Activated B cell treated with CpG ODN at 0.5 μM for 24 hours (primary cell): ENCODE measurements at regions of chr22 and their contacts with region 1.

Region 1: GRCh38 chr22:43036282-43036829 is 21.4 kb upstream of the PACSIN2 start:
- DNase-seq: no peak
- ATAC-seq: no peak
- H3K4me3 Mint-ChIP-seq: no peak overlapping the region
- H3K27ac Mint-ChIP-seq: no peak overlapping the region
- H3K4me1 Mint-ChIP-seq: peaks cover 2% of the 10 kb centered on the region
- H3K27me3 Mint-ChIP-seq: no peaks in the 10 kb centered on the region
- CTCF ChIP-seq: no peak

Region 2: DNA sequence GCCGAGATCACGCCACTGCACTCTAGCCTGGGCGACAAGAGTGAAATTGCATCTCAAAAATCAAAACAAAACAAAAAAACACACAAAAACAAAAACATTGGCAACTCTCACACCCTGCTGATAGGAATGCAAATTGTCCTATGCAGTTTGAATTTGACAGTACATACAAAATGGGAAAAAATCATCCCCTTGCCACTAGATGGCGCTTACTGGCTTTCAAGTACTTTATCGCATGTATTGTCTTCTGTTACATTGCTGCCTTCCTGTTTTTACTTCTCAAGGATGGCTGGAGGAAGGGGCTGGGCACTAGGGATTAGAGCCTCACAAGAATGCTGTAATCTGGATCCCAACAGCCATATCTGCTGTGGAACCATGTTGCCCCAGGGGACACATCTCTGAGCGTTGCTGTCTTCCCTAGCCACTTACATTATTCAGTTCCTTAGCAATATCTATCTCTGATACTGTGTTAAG is 256.3 kb before region 1 on chr22:
- CTCF ChIA-PET with region 1: interaction called, 4 read pairs
- POLR2A ChIA-PET with region 1: no interaction called
- intact Hi-C with region 1: loop called (anchors 1 kb)
- DNase-seq: no peak
- ATAC-seq: peak; percentile 80
- H3K4me3 Mint-ChIP-seq: no peak overlapping the region
- H3K27ac Mint-ChIP-seq: no peak overlapping the region
- H3K4me1 Mint-ChIP-seq: peaks cover 2% of the 10 kb centered on the region
- H3K27me3 Mint-ChIP-seq: no peaks in the 10 kb centered on the region
- CTCF ChIP-seq: peak; percentile 31

Region 3: DNA sequence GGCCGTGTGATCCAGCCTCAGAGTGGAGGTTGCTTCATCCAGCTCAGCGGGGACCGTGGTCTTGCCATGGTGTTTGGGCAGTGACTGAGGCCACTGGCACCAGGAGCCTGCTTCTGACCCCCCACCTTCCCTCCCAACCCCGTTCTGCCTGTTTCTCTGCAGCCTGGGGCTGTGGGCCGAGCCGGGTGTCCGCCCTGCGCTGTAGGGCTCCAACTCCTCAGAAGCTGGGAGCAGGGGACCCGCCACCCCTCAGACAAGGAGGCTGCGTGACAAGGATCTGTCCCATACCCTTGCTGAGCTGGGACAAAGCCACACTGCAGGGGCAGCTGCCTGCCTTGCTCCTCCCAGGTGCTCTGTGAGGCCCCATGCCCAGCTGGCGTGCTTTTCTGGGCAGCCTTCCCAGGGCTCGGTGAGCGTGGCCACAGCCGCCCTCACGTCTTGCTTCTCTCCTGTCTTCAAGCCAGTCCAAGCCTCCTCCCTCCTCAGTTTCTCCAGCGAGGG is 167.6 kb before region 1 on chr22:
- CTCF ChIA-PET with region 1: interaction called, 25 read pairs
- POLR2A ChIA-PET with region 1: interaction called, 4 read pairs
- intact Hi-C with region 1: loop called (anchors 1 kb)
- DNase-seq: no peak
- ATAC-seq: no peak
- H3K4me3 Mint-ChIP-seq: no peak overlapping the region
- H3K27ac Mint-ChIP-seq: no peak overlapping the region
- H3K4me1 Mint-ChIP-seq: peaks cover 12% of the 10 kb centered on the region
- H3K27me3 Mint-ChIP-seq: no peaks in the 10 kb centered on the region
- CTCF ChIP-seq: no peak

Region 4: DNA sequence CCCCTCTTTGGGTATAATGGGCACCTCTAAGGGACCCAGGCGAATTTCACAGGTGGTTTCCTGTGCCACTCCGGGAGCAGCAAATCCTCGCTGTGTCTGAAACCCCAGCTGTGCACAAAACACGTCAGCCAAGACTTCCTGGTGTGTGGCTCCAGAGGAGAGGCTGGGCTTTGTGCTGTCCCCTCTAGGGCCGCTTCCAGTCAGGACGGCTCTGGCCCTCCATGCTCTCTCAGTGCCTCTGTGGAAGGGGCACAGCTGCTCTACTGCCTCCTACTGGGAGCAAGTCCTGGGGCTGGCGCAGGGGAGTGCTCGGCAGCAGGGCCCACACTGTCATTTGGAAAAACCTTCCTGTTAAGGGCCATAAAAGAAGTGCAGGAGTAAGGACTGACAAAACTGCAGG is 155.5 kb before region 1 on chr22:
- CTCF ChIA-PET with region 1: interaction called, 3 read pairs
- POLR2A ChIA-PET with region 1: interaction called, 3 read pairs
- intact Hi-C with region 1: loop called (anchors 5 kb)
- DNase-seq: no peak
- ATAC-seq: no peak
- H3K4me3 Mint-ChIP-seq: no peak overlapping the region
- H3K27ac Mint-ChIP-seq: no peak overlapping the region
- H3K4me1 Mint-ChIP-seq: peaks cover 12% of the 10 kb centered on the region
- H3K27me3 Mint-ChIP-seq: no peaks in the 10 kb centered on the region
- CTCF ChIP-seq: no peak

Region 5: DNA sequence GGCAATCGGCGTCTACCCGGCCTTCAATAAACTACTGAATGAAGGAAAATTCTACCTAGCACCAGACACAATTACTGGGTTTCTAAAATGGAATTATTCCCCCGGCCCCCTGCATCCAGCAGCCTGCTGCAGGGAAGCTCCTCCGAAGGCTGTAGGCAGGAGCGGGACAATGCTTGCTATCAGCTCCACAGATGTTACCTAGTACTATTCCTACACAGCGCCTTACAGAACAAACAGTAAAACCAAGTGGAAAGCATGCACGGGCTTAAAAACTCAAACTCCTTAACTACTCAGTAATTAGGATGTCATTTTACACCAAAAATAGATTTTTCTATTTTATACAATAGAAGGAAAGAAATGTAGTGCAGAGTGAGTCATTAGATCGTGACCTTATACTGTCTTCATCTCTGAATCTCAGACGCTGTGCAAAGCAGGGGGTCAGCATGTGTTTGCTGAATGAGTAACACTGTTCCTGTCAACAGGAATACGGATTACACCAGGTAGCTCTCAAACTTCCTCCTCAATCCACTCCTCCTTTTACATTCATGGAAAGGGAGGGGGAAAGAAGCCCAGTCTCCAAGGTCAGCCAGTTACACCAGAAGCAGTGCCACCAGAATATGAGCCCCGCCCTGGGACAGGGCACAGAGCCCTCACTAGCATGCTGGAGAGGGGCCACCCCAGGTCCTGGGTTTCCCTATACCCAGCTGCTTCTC is 96.3 kb before region 1 on chr22:
- CTCF ChIA-PET with region 1: no interaction called
- POLR2A ChIA-PET with region 1: no interaction called
- intact Hi-C with region 1: no loop called
- DNase-seq: no peak
- ATAC-seq: no peak
- H3K4me3 Mint-ChIP-seq: no peak overlapping the region
- H3K27ac Mint-ChIP-seq: no peak overlapping the region
- H3K4me1 Mint-ChIP-seq: peaks cover 52% of the 10 kb centered on the region
- H3K27me3 Mint-ChIP-seq: no peaks in the 10 kb centered on the region
- CTCF ChIP-seq: no peak

Region 6: DNA sequence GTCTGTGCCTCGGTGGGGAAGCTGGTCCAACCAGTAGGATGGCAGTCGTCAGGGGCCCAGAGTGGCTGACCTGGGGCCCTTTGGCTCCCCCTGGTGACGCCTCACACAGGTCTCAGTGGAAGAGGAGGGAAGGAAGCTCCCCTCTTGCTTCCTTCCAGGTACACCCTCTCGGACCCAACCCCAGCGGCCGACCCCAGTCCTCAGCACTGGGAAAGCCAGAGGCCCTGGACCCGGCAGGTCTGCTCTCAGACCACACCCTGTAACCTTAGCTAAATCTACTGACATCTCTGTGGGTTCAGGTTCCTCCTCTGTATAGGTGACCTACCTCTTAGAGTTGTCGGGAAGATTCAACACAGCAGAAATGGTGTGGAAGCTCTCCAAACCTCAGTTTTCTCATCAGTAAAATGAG is 310.2 kb after region 1 on chr22:
- CTCF ChIA-PET with region 1: no interaction called
- POLR2A ChIA-PET with region 1: no interaction called
- intact Hi-C with region 1: no loop called
- DNase-seq: peak; percentile 44
- ATAC-seq: peak; percentile 45
- H3K4me3 Mint-ChIP-seq: no peak overlapping the region
- H3K27ac Mint-ChIP-seq: no peak overlapping the region
- H3K4me1 Mint-ChIP-seq: peaks cover 11% of the 10 kb centered on the region
- H3K27me3 Mint-ChIP-seq: peaks cover 42% of the 10 kb centered on the region
- CTCF ChIP-seq: no peak

Region 7: DNA sequence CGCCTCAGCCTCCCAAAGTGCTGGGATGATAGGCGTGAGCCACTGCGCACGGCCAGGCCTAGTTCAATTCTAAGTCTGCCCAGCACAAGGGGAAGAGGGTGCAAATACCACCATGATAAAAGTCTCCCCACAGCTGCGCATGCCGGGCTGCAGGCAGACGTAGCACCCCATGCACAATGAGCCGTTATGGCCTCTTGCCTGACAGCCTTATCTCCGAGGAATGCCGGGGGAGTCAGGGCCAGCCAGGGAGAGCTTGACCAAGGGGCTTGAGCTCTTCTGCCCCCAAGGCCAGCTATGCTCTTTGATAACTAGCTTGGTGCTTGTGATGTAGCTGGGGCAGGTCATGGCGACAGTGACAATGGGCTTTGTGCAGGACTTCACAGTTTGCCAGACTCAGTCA is 320.5 kb after region 1 on chr22:
- CTCF ChIA-PET with region 1: no interaction called
- POLR2A ChIA-PET with region 1: no interaction called
- intact Hi-C with region 1: no loop called
- DNase-seq: no peak
- ATAC-seq: no peak
- H3K4me3 Mint-ChIP-seq: no peak overlapping the region
- H3K27ac Mint-ChIP-seq: no peak overlapping the region
- H3K4me1 Mint-ChIP-seq: no peaks in the 10 kb centered on the region
- H3K27me3 Mint-ChIP-seq: peaks cover 16% of the 10 kb centered on the region
- CTCF ChIP-seq: no peak